Heart right ventricle (tissue), 16 donors: ENCODE measurements at regions of chr2 and their contacts with region 1.

Region 1: GRCh38 chr2:9889812-9890261 is 46.6 kb downstream of the TAF1B start:
- DNase-seq: no peak
- ATAC-seq: no peak
- H3K4me3 ChIP-seq: no peak overlapping the region
- H3K27ac ChIP-seq: no peak overlapping the region
- H3K4me1 ChIP-seq: peaks cover 0 to 11% (median 0%) of the 10 kb centered on the region in 9 donors
- H3K27me3 ChIP-seq: no peaks in the 10 kb centered on the region
- CTCF ChIP-seq: no peak

Region 2: DNA sequence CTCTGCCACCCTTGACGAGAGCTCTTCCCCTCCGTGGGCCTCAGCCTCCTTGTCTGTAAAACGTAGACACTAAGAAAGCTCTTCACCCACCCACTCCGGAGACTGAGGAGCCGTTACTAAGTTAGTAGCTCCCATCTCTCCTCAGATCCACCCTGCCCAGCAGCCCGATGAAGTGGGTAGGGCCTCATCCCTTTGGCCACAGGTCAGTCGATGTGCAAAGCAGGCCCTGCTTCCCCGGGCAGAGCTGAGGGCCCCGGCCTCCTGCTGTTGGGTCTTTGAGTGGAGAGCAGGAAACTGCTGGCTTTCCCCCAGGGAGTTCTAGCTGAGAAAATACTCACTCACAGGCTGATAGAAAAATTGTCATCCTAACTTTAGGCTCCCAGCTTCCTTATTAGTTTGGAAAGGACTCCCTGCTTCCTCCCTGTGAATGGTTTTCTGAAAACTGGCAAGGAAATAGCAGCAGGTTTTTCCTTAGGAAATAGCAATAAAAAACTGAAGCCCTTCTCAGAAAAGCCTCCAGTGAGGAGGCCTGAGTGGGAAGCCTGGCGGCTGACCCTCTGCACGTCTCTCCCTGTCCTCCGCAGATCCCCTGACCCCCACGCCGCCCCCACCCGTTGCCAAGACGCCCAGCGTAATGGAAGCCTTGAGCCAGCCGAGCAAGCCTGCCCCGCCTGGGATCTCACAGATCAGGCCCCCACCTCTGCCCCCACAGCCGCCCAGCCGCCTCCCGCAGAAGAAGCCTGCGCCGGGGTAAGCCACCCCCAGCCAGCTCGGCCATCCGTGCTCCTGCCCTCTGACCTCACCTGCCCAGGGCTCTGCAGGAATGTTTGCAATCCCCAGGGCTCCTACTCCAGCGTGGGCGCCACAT is 496.7 kb before region 1 on chr2:
- intact Hi-C with region 1: no loop called
- DNase-seq: peak; percentile 48 to 50
- ATAC-seq: peak; percentile 37 to 71 (median 60)
- H3K4me3 ChIP-seq: no peak overlapping the region
- H3K27ac ChIP-seq: peak overlapping the region; percentile 33 to 87 (median 70)
- H3K4me1 ChIP-seq: peaks cover 6 to 28% (median 20%) of the 10 kb centered on the region in 9 donors
- H3K27me3 ChIP-seq: no peaks in the 10 kb centered on the region
- CTCF ChIP-seq: no peak

Region 3: GRCh38 chr2:10985260-10985659 is 1095.4 kb after region 1 on chr2:
- intact Hi-C with region 1: loop called in 1 of 10 experiments (anchors 5 kb)
- DNase-seq: no peak
- ATAC-seq: no peak
- H3K4me3 ChIP-seq: no peak overlapping the region
- H3K27ac ChIP-seq: peak overlapping the region in 6 of 10 donors; percentile 24 to 87 (median 38)
- H3K4me1 ChIP-seq: peaks cover 0 to 24% (median 3%) of the 10 kb centered on the region in 9 donors
- H3K27me3 ChIP-seq: peaks cover 0 to 23% (median 0%) of the 10 kb centered on the region in 7 donors
- CTCF ChIP-seq: no peak